ENCODE measurements at regions of chr3 and their contacts with region 1.

Region 1: DNA sequence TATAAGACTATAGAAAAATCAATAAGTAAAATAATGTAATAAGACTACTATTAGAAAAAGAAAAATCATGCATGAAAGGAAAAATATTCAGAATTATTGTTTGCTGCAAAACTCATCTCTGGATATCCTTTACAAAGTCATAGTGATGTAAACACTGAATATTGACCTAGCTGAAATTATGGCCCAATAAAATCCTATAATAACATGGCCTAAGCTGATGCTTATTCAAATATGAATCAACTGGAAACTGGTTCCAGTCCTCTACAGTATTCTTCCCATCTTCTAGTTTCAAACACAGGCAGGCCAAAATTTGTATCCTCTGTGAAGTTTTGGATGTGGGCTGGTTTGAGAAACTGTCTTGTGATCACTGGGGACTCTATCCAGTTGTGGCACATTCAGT is 134.5 kb downstream of the CNTN3 start:
- DNase-seq: no peak
- H3K4me3 ChIP-seq: no peak overlapping the region
- H3K27ac ChIP-seq: no peak overlapping the region
- H3K4me1 ChIP-seq: no peaks in the 10 kb centered on the region
- H3K27me3 ChIP-seq: no peaks in the 10 kb centered on the region
- CTCF ChIP-seq: no peak

Region 2: DNA sequence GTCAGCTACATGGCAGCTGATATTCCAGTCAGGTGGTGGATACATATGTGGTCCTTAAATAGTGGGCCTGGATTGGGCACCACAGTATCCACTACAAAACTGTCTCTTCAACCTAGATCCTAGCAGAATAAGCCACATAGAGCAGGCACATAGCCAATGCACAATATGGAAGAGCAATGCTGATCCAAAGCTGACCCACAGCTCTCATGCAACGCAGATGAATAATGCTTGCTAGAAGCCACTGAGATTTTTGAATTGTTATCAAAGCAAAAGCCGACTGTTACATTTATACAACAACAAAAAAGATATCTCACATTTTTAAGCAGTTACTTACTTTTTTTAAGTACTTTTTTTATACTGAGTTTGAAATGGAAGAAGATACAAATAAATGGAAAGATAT is 123.4 kb after region 1 on chr3:
- intact Hi-C with region 1: loop called (anchors 5 kb)
- DNase-seq: no peak
- H3K4me3 ChIP-seq: no peak overlapping the region
- H3K27ac ChIP-seq: no peak overlapping the region
- H3K4me1 ChIP-seq: no peaks in the 10 kb centered on the region
- H3K27me3 ChIP-seq: no peaks in the 10 kb centered on the region
- CTCF ChIP-seq: no peak

Measured in kidney (tissue), 22 donors.